ENCODE measurements at regions of chr12 and their contacts with region 1.

Region 1: GRCh38 chr12:6944381-6945186 is 762 bp downstream of the C12orf57 start:
- DNase-seq: peak; percentile 96
- H3K4me3 Mint-ChIP-seq: peak overlapping the region; percentile 93
- H3K27ac Mint-ChIP-seq: peak overlapping the region; percentile 98
- H3K4me1 Mint-ChIP-seq: peaks cover 62% of the 10 kb centered on the region
- H3K27me3 Mint-ChIP-seq: no peaks in the 10 kb centered on the region

Region 2: GRCh38 chr12:6890789-6891645 is 53.6 kb before region 1 on chr12:
- intact Hi-C with region 1: loop called (anchors 2 kb)
- DNase-seq: peak; percentile 100
- H3K4me3 Mint-ChIP-seq: peak overlapping the region; percentile 83
- H3K27ac Mint-ChIP-seq: peak overlapping the region; percentile 97
- H3K4me1 Mint-ChIP-seq: peaks cover 21% of the 10 kb centered on the region
- H3K27me3 Mint-ChIP-seq: no peaks in the 10 kb centered on the region

Region 3: DNA sequence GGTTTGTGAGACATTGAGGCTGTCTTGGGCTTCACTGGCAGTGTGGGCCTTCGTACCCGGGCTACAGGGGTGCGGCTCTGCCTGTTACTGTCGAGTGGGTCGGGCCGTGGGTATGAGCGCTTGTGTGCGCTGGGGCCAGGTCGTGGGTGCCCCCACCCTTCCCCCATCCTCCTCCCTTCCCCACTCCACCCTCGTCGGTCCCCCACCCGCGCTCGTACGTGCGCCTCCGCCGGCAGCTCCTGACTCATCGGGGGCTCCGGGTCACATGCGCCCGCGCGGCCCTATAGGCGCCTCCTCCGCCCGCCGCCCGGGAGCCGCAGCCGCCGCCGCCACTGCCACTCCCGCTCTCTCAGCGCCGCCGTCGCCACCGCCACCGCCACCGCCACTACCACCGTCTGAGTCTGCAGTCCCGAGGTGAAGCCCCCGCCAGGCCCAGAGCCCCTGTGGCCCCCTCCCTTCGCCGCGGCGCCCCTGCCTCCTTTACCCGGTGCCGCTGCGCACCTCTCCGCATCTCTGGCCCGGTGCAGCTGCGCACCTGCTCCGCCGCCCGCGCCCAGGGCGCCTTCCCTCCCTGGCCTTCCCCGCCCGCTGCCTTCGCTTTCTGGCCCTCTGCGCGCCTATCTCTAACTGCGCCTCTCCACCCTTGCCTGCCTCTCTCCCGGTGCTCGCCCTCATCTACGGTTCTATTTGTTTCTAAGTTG is 30.2 kb before region 1 on chr12 and contains the start of gene ENO2:
- intact Hi-C with region 1: loop called (anchors 1 kb)
- DNase-seq: peak; percentile 94
- H3K4me3 Mint-ChIP-seq: peak within 1 kb of the TSS; percentile 99
- H3K27ac Mint-ChIP-seq: peak within 1 kb of the TSS; percentile 94
- H3K4me1 Mint-ChIP-seq: peaks cover 40% of the 10 kb centered on the region
- H3K27me3 Mint-ChIP-seq: no peaks in the 10 kb centered on the region
- total RNA-seq, gene ENO2: 202 and 206 TPM in 2 replicates

Region 4: DNA sequence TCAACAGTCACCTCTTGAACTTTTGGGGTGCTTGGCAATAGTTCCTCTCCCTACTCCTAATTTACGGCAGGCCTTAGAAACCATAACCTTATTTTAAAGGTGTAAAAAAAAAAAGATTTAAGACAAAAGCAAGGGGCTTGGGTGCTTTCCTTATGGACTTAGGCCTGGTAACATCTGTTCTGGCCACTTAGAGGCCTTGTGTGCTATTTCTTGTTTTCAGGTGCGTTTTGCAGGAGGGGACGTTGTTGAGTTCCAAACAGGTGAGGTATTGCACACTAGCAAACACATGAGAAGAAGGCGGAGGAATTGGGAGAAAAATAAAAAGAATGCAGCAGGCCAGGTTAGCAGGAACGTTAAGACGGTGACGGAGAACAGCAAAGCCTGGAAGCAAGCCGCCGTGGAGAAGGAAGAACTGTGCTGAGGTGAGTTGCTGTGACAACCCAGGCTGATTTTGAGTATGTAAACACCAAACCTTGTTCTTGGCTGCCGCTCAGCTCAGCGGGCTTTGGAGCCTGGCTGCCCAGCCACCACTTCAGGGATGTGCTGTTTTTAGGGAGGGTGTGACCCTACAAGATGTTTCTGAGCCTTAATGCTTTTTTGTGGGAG is 43.5 kb after region 1 on chr12:
- intact Hi-C with region 1: no loop called
- DNase-seq: no peak
- H3K4me3 Mint-ChIP-seq: no peak overlapping the region
- H3K27ac Mint-ChIP-seq: no peak overlapping the region
- H3K4me1 Mint-ChIP-seq: no peaks in the 10 kb centered on the region
- H3K27me3 Mint-ChIP-seq: no peaks in the 10 kb centered on the region

Region 5: DNA sequence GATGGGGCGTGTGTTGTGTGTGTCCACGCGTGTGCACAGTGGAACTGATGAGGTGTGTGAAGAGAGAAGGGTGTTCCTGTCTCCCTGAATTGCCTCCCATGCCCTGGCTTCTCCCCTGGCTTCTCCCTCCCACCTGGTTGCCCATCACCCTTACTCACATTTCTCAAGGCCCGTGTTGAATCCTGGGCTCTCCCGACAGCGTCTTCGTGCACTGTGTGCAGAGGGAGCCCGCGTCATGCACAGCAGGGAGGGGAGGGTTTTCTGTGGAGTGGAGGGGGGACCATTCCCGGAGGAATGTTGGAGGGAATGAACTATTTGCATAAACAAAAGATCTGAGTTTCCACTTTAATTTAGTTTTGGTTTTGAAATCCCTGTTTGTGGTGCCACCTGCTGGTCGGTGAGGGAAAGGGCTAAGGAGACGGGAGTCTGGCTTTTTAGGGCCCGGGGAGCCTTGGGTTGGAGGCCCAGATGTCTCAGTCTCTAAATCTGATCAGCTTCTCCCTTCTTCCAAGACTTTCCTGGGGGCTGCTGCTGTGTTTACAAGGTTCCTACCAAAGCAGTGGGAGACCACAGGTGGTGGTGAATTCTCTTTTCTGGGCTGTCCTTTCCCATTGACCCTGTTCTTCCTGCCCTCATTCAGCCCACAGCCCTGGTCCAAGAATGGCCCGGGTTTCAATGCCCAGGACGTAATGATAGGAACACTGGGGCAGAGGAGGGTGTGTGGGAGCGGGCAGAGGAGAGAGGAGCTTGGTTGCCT is 147.8 kb after region 1 on chr12 and contains the start of gene C1R:
- intact Hi-C with region 1: loop called (anchors 1 kb)
- DNase-seq: peak; percentile 90
- H3K4me3 Mint-ChIP-seq: peak within 1 kb of the TSS; percentile 83
- H3K27ac Mint-ChIP-seq: peak within 1 kb of the TSS; percentile 66
- H3K4me1 Mint-ChIP-seq: peaks cover 10% of the 10 kb centered on the region
- H3K27me3 Mint-ChIP-seq: no peaks in the 10 kb centered on the region
- total RNA-seq, gene C1R: 1.4 and 2.5 TPM in 2 replicates

Region 6: DNA sequence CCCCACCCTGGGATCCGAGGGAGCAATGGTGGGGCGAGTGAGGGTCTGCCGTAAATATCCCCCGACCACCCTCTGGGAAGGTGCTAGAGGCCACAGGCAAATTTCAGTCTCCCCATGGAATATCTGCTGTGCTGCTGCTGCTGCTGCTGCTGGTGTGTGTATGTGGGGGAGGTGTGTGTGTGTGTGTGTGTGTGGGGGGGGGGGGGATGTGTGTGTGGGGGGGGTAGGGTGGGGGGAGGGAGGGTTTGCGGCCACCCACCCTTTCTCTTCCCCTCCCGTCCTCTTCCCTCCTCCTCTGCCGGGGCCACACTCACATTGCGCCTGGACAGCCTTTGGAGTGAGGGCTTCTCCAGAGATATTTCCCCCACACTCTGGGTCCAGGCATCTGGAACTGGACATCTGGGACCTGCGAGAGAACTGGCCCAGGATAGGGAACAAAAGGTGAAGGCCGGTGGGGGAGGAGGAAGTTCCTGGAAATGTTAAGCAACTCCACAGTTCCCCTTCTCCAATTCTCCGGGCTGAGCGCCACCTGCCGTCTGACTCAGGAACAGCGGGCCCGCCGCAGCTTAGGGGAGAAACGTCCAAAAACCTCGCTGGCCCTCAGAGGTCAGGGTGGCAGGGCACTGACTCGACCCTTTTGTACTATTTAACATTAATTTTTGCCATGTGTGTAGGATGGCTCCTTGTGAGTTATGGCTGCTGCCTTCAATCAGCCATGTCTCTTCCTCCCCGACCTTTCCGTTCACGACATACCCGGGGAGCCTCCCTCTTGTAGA is 164.4 kb after region 1 on chr12 and contains the start of gene C1RL:
- intact Hi-C with region 1: loop called (anchors 1 kb)
- DNase-seq: peak; percentile 96
- H3K4me3 Mint-ChIP-seq: peak within 1 kb of the TSS; percentile 95
- H3K27ac Mint-ChIP-seq: peak within 1 kb of the TSS; percentile 92
- H3K4me1 Mint-ChIP-seq: peaks cover 42% of the 10 kb centered on the region
- H3K27me3 Mint-ChIP-seq: no peaks in the 10 kb centered on the region
- total RNA-seq, gene C1RL: 19.8 and 23.0 TPM in 2 replicates

Measured in activated CD4-positive, alpha-beta T cell treated with anti-CD3 and anti-CD28 coated beads, Interleukin-2, amount 10 ng/mL, durations not matched to agents 24 days and 14 days (primary cell).